ENCODE measurements at regions of chr6 and their contacts with region 1.

Region 1: DNA sequence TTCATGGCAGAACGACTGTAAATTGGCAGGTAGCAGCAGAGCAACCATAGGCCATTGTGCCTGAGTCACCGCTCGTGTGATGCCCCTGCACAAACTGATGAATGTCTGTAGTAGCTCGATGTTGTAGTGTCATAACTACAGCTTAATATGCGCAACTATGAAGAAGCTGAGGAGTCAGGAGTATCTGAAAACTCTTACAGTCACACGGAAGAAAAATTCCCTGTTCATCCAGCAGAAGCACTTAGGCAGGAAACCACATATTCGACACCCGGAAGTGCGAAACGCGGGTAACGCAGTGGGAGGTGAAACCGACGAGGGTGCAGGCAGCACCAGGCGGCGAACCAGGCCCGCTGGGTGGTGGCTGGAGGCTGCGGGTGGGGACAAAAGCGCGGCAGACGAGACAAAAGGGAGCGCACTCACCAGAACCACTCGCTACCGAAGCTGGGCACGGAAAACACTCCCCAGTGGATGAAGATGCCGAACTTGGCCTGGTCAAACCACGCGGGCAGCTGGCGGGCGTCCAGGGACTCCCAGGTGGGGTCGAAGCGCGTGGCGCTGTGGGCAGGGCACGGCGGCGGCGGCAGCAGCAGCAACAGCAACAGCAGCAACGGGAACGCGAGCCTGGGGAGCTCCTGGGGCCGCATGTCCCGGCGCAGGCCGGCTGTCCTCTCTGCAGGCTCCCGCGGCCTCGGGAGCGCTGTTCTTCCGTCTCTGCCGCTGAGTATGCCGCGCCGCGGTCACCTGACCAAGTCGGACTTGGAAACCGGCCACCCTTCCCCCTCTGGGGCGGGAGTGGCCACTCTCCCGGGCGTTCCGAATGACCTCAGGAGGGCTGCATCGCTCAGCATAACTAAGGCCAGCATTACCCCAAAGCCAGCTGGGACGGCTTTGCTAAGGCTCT is at the start of gene FUCA2:
- H3K4me3 ChIP-seq: peak within 1 kb of the TSS; percentile 59
- H3K27ac ChIP-seq: peak within 1 kb of the TSS; percentile 74; the same call in 1 of the 2 replicates
- H3K4me1 ChIP-seq: no peaks in the 10 kb centered on the region
- CTCF ChIP-seq: peak; percentile 86

Region 2: DNA sequence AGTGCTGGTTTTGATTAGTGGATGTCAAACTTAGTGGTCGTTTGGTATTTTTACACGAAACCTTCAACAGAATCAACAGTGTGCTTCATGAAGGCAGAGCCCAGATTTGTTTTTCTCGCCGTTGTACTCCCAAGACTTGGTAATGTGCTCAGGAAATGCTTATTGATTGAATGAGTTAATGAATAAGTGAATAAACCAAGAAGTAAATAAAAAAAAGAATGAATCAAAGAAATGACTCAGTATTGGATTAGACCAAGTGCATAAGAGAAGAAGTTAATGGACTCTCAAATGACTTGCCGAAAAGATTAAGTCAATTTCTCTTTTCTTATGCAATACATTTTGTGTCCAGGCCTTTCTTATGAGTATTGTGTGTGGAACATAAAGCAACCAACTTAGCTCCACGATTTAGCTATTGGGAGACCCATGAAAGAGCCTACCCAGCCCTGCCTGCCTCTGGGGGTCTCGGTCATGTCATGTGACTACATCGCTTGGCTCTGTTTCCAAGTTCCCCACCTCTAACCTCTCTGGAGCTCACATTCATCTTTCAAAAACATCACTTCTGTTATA is 10.9 kb after region 1 on chr6:
- CTCF ChIA-PET with region 1: interaction called, 12 read pairs
- POLR2A ChIA-PET with region 1: no interaction called
- H3K4me3 ChIP-seq: no peak overlapping the region
- H3K27ac ChIP-seq: no peak overlapping the region
- H3K4me1 ChIP-seq: no peaks in the 10 kb centered on the region
- CTCF ChIP-seq: no peak

Region 3: GRCh38 chr6:143536865-143537691 is 25.8 kb after region 1 on chr6:
- CTCF ChIA-PET with region 1: interaction called, 12 read pairs
- POLR2A ChIA-PET with region 1: interaction called, 11 read pairs
- H3K4me3 ChIP-seq: peak overlapping the region; percentile 56
- H3K27ac ChIP-seq: peak overlapping the region; percentile 78; the same call in 1 of the 2 replicates
- H3K4me1 ChIP-seq: 0 out of 2 replicates have a peak, but pooled peaks cover 3% of the 10 kb centered on the region
- CTCF ChIP-seq: peak; percentile 39; the same call in 1 of the 2 replicates

Region 4: DNA sequence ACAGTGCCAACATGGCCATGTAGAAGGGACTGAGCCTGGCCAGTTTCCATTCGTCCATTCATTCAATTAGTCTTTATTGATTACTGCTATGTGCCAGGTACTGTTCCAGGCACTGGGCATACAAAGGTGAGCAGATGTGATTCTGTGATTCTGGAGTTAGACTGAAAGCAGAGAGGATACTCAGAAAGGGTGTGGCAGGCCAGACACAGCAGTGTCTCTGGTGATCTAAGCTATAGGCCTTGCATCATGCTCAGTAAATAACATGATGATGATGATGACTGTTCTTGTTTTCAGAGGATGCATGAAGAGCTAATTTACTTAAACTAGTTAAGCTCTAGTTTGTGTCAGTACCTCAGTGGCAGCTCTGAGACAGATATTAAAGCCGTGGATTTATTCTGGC is 31.6 kb after region 1 on chr6:
- CTCF ChIA-PET with region 1: interaction called, 12 read pairs
- POLR2A ChIA-PET with region 1: interaction called, 3 read pairs
- H3K4me3 ChIP-seq: no peak overlapping the region
- H3K27ac ChIP-seq: no peak overlapping the region
- H3K4me1 ChIP-seq: no peaks in the 10 kb centered on the region
- CTCF ChIP-seq: no peak

Region 5: DNA sequence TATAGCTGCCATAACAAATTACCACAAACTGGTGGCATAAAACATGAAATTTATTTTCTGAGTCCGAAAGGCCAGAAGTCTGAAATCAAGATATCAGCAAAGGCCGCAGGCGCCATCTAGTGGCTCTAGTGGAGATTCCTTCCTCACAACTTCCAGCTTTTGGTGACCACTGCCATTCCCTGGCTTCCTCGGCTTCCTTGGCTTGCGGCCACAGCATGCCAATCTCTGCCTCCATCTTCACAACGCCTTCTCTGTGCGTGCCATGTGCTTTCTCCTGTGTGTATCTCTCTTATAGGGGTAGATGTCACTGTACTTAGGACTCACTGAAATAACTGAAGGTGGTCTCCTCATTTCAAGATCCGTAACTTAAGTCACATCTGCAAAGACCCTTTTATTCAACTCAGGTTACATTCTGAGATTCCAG is 502.3 kb after region 1 on chr6:
- CTCF ChIA-PET with region 1: interaction called, 14 read pairs
- POLR2A ChIA-PET with region 1: no interaction called
- H3K4me3 ChIP-seq: no peak overlapping the region
- H3K27ac ChIP-seq: no peak overlapping the region
- H3K4me1 ChIP-seq: no peaks in the 10 kb centered on the region
- CTCF ChIP-seq: peak; percentile 65

Region 6: GRCh38 chr6:144343701-144344428 is 832.6 kb after region 1 on chr6:
- CTCF ChIA-PET with region 1: no interaction called
- POLR2A ChIA-PET with region 1: no interaction called
- H3K4me3 ChIP-seq: no peak overlapping the region
- H3K27ac ChIP-seq: no peak overlapping the region
- H3K4me1 ChIP-seq: 0 out of 2 replicates have a peak, but pooled peaks cover 5% of the 10 kb centered on the region
- CTCF ChIP-seq: no peak

Measured in HEK293 (cell line).